Panc1 (cell line): ENCODE measurements at regions of chr1 and their contacts with region 1.

Region 1: GRCh38 chr1:206982216-206982615 is 12.0 kb upstream of the FCAMR start:
- DNase-seq: peak; percentile 22
- ATAC-seq: peak; percentile 94
- H3K4me3 ChIP-seq: no peak overlapping the region
- H3K27ac ChIP-seq: no peak overlapping the region
- H3K4me1 ChIP-seq: no peaks in the 10 kb centered on the region
- H3K27me3 ChIP-seq: peaks cover 7% of the 10 kb centered on the region
- CTCF ChIP-seq: peak; percentile 84

Region 2: DNA sequence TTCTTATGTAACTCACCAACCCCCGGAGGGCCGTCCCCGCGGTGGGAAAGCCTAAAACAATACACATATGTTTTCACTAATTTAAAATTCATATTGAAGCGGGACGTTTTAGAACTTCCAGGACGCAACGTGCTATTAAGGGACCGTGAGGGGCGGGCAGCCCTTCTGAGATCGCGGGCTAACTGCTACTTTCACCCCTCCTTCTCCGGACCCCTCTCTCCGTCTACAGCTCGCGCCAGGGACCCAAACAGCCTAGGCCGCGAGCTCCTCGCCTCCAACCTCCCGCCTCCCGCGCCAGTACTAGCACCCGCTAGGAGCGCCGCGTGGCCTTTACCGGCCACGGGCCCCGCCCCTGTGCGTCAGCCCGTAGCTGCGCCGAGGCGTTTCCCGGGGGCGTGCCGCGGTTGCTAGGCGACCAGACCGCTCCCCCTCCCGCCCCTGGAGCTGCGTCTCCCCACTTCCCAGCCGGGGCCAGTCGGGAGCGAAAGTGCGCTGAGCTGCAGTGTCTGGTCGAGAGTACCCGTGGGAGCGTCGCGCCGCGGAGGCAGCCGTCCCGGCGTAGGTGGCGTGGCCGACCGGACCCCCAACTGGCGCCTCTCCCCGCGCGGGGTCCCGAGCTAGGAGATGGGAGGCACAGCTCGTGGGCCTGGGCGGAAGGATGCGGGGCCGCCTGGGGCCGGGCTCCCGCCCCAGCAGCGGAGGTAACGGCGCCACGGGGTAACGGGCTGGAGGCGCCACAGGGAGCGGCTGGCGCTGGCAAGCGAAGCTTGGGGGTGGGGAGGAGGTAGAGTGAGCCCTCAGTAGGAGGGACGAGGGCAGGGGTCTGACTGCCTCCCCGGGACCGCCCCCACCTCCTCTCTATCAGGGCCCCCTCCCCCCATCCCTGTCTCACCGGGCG is 346.9 kb before region 1 on chr1 and contains the start of gene DYRK3:
- CTCF ChIA-PET with region 1: interaction called, 4 read pairs
- POLR2A ChIA-PET with region 1: no interaction called
- in situ Hi-C with region 1: no loop called
- intact Hi-C with region 1: loop called (anchors 10 kb)
- DNase-seq: peak; percentile 50
- ATAC-seq: peak; percentile 97
- H3K4me3 ChIP-seq: peak within 1 kb of the TSS; percentile 91 to 93
- H3K27ac ChIP-seq: peak within 1 kb of the TSS; percentile 88
- H3K4me1 ChIP-seq: peaks cover 15% of the 10 kb centered on the region
- H3K27me3 ChIP-seq: no peaks in the 10 kb centered on the region
- CTCF ChIP-seq: no peak
- total RNA-seq, gene DYRK3: 12.0 TPM

Region 3: DNA sequence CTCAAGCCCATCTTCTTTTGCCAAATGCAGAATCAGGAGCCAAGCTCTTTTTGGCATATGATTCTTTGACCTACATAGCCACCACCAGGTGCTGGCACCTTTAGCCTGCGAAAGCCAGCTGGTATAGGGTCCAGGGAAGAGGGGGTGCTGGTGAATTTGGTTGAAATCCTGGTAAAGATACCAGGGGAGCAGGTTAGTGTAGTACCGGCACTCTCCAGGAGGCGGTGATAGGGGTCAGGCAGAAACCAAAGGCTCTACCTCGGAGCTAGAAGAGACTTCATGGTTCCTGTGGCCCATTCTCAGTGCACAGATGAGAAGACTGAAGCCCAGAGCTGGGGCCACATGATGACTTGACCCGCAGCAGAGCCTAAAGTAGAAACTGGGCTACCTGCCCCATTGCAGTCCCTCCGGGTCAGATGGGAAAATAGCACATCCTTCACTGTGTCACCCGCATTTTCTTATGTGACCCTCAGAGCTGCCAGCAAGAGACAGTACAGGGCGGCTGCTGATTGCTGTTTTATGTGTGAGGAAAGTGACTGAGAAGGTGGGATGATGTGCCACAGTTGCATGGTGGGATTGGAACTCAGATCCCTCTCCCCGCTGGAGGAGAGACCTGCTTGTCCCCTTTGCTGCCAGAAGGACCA is 247.6 kb before region 1 on chr1:
- CTCF ChIA-PET with region 1: interaction called, 3 read pairs
- POLR2A ChIA-PET with region 1: no interaction called
- in situ Hi-C with region 1: no loop called
- intact Hi-C with region 1: loop called (anchors 10 kb)
- DNase-seq: peak; percentile 39
- ATAC-seq: peak; percentile 74
- H3K4me3 ChIP-seq: no peak overlapping the region
- H3K27ac ChIP-seq: no peak overlapping the region
- H3K4me1 ChIP-seq: no peaks in the 10 kb centered on the region
- H3K27me3 ChIP-seq: no peaks in the 10 kb centered on the region
- CTCF ChIP-seq: peak; percentile 86

Region 4: DNA sequence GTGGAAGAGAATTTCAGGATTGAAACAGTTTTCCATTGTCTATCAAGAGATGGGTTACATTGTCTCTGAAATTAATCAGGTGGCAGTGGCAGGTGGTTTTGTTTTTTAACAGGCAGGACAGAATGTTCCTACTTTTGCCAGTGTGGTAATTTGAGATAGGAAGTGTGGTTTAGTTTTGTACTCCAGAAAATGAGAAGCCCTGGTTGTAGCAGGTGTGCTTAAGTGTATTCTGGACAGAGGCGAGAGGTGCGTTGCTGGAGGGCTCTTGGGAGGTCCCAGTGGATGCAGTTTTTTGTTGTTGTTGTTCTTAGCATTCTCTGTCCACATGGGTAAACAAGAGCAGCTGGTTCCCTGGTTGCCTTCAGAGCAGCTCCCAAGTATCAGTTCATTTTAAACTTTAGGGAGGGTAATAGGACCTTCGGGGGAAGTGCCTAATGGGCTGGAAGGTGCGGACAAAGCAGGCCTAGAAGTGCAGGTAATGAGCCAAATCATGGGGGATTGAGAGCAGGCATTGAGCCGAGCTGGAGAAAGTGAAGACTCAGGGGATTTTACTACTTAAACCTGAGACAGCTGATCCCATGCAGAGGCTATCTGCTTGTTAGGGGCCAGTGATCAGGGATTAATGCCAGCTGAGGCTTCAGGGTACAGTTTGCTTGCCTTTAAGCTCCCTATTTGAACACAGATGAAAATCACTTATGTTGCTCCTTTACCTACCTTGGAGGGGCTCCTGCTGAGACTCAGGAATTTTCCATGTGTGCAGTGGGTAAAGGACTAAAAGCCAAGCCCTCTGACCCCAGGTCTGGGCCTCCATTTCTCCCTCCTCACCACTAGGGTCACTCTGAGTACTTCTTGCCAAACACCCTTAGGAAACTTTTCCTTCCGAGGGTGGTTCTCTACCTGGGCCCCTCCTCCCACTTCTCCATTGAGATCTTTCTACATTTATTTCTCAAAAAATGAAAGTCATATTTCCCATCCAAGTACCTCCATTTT is 77.0 kb after region 1 on chr1:
- CTCF ChIA-PET with region 1: no interaction called
- POLR2A ChIA-PET with region 1: no interaction called
- in situ Hi-C with region 1: no loop called
- intact Hi-C with region 1: no loop called
- DNase-seq: no peak
- ATAC-seq: no peak
- H3K4me3 ChIP-seq: no peak overlapping the region
- H3K27ac ChIP-seq: no peak overlapping the region
- H3K4me1 ChIP-seq: peaks cover 5% of the 10 kb centered on the region; the same call in 1 of the 2 replicates
- H3K27me3 ChIP-seq: no peaks in the 10 kb centered on the region
- CTCF ChIP-seq: no peak

Region 5: GRCh38 chr1:207103892-207104373 is 121.7 kb after region 1 on chr1 and contains the start of gene C4BPA:
- CTCF ChIA-PET with region 1: no interaction called
- POLR2A ChIA-PET with region 1: no interaction called
- in situ Hi-C with region 1: no loop called
- intact Hi-C with region 1: no loop called
- DNase-seq: no peak
- ATAC-seq: no peak
- H3K4me3 ChIP-seq: no peak within 1 kb of the TSS
- H3K27ac ChIP-seq: no peak within 1 kb of the TSS
- H3K4me1 ChIP-seq: no peaks in the 10 kb centered on the region
- H3K27me3 ChIP-seq: no peaks in the 10 kb centered on the region
- CTCF ChIP-seq: no peak
- total RNA-seq, gene C4BPA: 0.26 TPM